ENCODE measurements at regions of chr2 and their contacts with region 1.

Region 1: DNA sequence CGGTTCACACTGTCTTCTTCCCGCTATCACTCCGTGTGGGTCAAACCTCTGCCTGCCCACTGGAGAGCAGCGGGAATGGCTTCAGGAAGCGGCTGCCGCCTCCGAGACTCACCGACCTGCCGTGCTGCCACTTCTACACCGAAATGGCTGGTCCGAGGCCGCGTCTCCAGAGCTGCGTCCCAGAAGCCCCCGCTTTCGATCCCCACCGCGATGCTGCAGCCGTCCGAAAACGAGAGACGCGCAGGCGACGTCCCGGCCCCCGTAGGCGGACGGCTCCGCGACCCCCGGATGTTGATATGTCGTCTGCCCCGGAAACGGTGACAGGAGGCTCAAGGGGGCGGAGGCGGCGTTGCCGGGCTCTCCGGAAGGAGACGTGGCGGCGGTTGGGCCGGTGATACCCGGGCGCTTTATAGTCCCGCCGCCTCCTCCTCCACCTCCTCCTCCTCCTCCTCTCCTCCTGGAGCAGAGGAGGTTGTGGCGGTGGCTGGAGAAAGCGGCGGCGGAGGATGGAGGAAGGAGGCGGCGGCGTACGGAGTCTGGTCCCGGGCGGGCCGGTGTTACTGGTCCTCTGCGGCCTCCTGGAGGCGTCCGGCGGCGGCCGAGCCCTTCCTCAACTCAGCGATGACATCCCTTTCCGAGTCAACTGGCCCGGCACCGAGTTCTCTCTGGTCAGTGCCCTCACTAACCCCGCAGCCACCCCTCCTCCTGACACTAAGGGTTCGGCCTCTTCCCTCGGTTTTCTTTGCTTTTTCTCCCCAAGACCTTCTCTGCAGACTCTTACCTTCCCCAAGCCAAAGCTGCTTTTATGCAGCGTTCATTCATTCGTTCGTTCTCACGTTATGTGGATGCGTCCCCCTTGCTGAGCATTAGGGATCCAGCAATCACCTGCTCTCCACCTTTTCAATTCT is at the starts of genes ASB3 and ERLEC1:
- DNase-seq: peak; percentile 87
- H3K4me3 Mint-ChIP-seq: peak within 1 kb of the TSS; percentile 99
- H3K27ac Mint-ChIP-seq: peak within 1 kb of the TSS; percentile 98
- H3K4me1 Mint-ChIP-seq: peaks cover 47% of the 10 kb centered on the region
- H3K27me3 Mint-ChIP-seq: no peaks in the 10 kb centered on the region
- total RNA-seq, gene ASB3: 18.6 and 21.5 TPM in 2 replicates
- total RNA-seq, gene ERLEC1: 28.4 and 29.6 TPM in 2 replicates

Region 2: GRCh38 chr2:53767405-53768241 is 19.3 kb before region 1 on chr2 and contains the start of gene CHAC2:
- intact Hi-C with region 1: loop called (anchors 1 kb)
- DNase-seq: peak; percentile 82
- H3K4me3 Mint-ChIP-seq: peak within 1 kb of the TSS; percentile 96
- H3K27ac Mint-ChIP-seq: peak within 1 kb of the TSS; percentile 97
- H3K4me1 Mint-ChIP-seq: peaks cover 38% of the 10 kb centered on the region
- H3K27me3 Mint-ChIP-seq: no peaks in the 10 kb centered on the region
- total RNA-seq, gene CHAC2: 24.1 and 25.6 TPM in 2 replicates

Region 3: GRCh38 chr2:53913721-53914120 is 126.8 kb after region 1 on chr2:
- intact Hi-C with region 1: loop called (anchors 5 kb)
- DNase-seq: peak; percentile 15
- H3K4me3 Mint-ChIP-seq: no peak overlapping the region
- H3K27ac Mint-ChIP-seq: peak overlapping the region; percentile 74
- H3K4me1 Mint-ChIP-seq: peaks cover 22% of the 10 kb centered on the region
- H3K27me3 Mint-ChIP-seq: no peaks in the 10 kb centered on the region

Region 4: GRCh38 chr2:54052825-54053718 is 266.1 kb after region 1 on chr2:
- intact Hi-C with region 1: loop called (anchors 10 kb)
- DNase-seq: no peak
- H3K4me3 Mint-ChIP-seq: peak overlapping the region; percentile 40
- H3K27ac Mint-ChIP-seq: peak overlapping the region; percentile 64
- H3K4me1 Mint-ChIP-seq: peaks cover 20% of the 10 kb centered on the region
- H3K27me3 Mint-ChIP-seq: no peaks in the 10 kb centered on the region

Region 5: GRCh38 chr2:54330162-54330925 is 543.4 kb after region 1 on chr2:
- intact Hi-C with region 1: loop called (anchors 5 kb)
- DNase-seq: peak; percentile 86
- H3K4me3 Mint-ChIP-seq: peak overlapping the region; percentile 81
- H3K27ac Mint-ChIP-seq: peak overlapping the region; percentile 69
- H3K4me1 Mint-ChIP-seq: peaks cover 17% of the 10 kb centered on the region
- H3K27me3 Mint-ChIP-seq: peaks cover 19% of the 10 kb centered on the region

Region 6: GRCh38 chr2:55693181-55694134 is 1906.5 kb after region 1 on chr2 and contains the start of gene PNPT1:
- intact Hi-C with region 1: loop called (anchors 5 kb)
- DNase-seq: peak; percentile 92
- H3K4me3 Mint-ChIP-seq: peak within 1 kb of the TSS; percentile 98
- H3K27ac Mint-ChIP-seq: peak within 1 kb of the TSS; percentile 89
- H3K4me1 Mint-ChIP-seq: peaks cover 39% of the 10 kb centered on the region
- H3K27me3 Mint-ChIP-seq: peaks cover 2% of the 10 kb centered on the region
- total RNA-seq, gene PNPT1: 65.1 and 71.1 TPM in 2 replicates

Measured in activated T-helper 1 cell treated with anti-CD3 and anti-CD28 coated beads, Interleukin-12 subunit alpha, Interleukin-12 subunit beta, Interleukin-2, Interleukin-4 antibody, amounts not matched to agents 30 ng/mL and 10 ng/mL and 1 ng/mL, durations not matched to agents 14 hours and 24 hours and 36 hours (primary cell).